Natural killer cell (primary cell): ENCODE measurements at regions of chr5 and their contacts with region 1.

Region 1: DNA sequence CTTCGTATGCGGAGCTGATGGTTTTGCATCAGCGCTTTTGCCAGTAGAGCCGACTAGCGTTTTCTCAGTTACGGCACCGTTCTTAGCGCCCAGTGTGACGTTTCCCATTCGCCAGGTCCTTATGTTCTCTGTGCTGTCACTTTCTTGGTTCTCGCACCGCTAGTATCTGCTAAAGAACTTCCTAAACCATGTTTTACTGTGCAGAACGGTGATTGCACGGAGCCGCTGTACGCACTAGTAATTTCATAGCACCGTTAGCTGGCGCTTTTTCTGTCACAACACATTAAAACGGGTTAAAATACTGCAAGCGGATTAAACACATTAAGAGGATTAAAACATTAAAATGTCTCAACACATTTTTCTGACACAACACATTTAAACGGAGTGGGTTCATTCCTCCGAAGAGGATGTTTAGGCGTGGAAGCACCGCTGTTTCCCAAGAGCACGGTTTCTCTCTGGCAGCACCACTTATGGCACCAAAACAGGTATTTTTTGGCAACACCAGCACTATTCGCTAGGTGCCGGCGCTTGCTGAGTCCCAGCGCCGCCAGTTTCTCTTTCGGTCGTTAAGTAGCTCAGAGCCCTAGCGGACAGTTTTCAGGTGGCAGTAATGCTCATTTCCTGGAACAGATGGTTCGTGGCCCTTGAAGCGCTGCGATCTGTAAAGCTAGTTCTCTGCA is 20.4 kb downstream of the ANXA2R start:
- DNase-seq: peak; percentile 73 to 96
- ATAC-seq: peak; percentile 64 to 83 (median 64)
- H3K4me3 ChIP-seq: peak overlapping the region; percentile 58
- H3K4me3 Mint-ChIP-seq: peak overlapping the region; percentile 91
- H3K27ac ChIP-seq: peak overlapping the region; percentile 93
- H3K27ac Mint-ChIP-seq: peak overlapping the region; percentile 99 to 100
- H3K4me1 ChIP-seq: peaks cover 22% of the 10 kb centered on the region
- H3K4me1 Mint-ChIP-seq: peaks cover 45 to 56% of the 10 kb centered on the region in 2 donors
- H3K27me3 ChIP-seq: no peaks in the 10 kb centered on the region
- H3K27me3 Mint-ChIP-seq: no peaks in the 10 kb centered on the region
- CTCF ChIP-seq: peak; percentile 61

Region 2: DNA sequence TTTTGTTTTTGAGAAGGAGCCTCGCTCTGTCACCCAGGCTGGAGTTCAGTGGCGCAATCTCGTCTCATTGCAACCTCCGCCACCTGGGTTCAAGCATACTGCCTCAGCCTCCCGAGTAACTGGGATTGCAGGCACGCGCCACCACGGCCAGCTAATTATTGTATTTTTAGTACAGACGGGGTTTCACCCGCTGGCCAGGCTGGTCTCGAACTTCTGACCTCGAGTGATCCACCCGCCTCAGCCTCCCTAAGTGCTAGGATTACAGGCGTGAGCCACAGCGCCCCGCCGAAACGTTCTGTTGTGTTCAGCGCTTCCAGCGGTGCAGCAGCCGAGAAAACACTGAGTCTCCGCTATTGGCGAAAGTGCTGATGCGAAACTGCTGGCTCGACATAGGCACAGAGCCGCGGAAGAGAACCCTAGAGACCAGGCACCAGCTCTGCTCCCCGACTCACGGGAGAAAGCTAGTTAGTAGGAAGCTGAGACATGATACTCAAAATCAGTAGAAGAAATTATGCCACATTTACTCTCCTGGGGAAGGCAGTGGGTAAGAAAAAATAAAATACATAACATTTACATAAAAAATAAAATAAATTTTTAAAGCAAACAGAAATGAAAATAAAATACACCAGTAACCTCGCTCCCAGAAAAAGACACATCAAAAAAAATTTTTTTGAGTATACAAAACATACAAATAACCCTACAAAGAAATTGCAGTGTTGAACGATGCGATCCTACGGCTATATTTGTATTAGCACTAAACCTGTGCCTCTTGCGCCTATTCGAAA is 11.2 kb before region 1 on chr5:
- intact Hi-C with region 1: loop called (anchors 1 kb)
- DNase-seq: peak; percentile 82 to 97
- ATAC-seq: peak; percentile 61 to 79 (median 65)
- H3K4me3 ChIP-seq: peak overlapping the region; percentile 81
- H3K4me3 Mint-ChIP-seq: peak overlapping the region; percentile 89
- H3K27ac ChIP-seq: peak overlapping the region; percentile 88
- H3K27ac Mint-ChIP-seq: peak overlapping the region; percentile 99 to 100
- H3K4me1 ChIP-seq: peaks cover 36% of the 10 kb centered on the region
- H3K4me1 Mint-ChIP-seq: peaks cover 27 to 49% of the 10 kb centered on the region in 2 donors
- H3K27me3 ChIP-seq: no peaks in the 10 kb centered on the region
- H3K27me3 Mint-ChIP-seq: no peaks in the 10 kb centered on the region
- CTCF ChIP-seq: no peak